PC-9 (cell line): ENCODE measurements at regions of chr10 and their contacts with region 1.

Region 1: GRCh38 chr10:126252884-126253618 is 135.2 kb downstream of the ADAM12 start:
- DNase-seq: peak in 1 of 2 experiments; percentile 42
- H3K4me3 ChIP-seq: no peak overlapping the region
- H3K27ac ChIP-seq: no peak overlapping the region
- H3K4me1 ChIP-seq: peaks cover 10% of the 10 kb centered on the region
- H3K27me3 ChIP-seq: no peaks in the 10 kb centered on the region
- CTCF ChIP-seq: no peak

Region 2: GRCh38 chr10:126199221-126199998 is 53.6 kb before region 1 on chr10:
- CTCF ChIA-PET with region 1: no interaction called
- POLR2A ChIA-PET with region 1: interaction called, 3 read pairs
- intact Hi-C with region 1: loop called (anchors 1 kb)
- DNase-seq: peak; percentile 72 to 75
- H3K4me3 ChIP-seq: no peak overlapping the region
- H3K27ac ChIP-seq: peak overlapping the region; percentile 79
- H3K4me1 ChIP-seq: peaks cover 35% of the 10 kb centered on the region
- H3K27me3 ChIP-seq: no peaks in the 10 kb centered on the region
- CTCF ChIP-seq: no peak

Region 3: GRCh38 chr10:126209451-126209850 is 43.6 kb before region 1 on chr10:
- CTCF ChIA-PET with region 1: no interaction called
- POLR2A ChIA-PET with region 1: no interaction called
- intact Hi-C with region 1: no loop called
- DNase-seq: no peak
- H3K4me3 ChIP-seq: no peak overlapping the region
- H3K27ac ChIP-seq: no peak overlapping the region
- H3K4me1 ChIP-seq: peaks cover 17% of the 10 kb centered on the region
- H3K27me3 ChIP-seq: no peaks in the 10 kb centered on the region
- CTCF ChIP-seq: no peak

Region 4: DNA sequence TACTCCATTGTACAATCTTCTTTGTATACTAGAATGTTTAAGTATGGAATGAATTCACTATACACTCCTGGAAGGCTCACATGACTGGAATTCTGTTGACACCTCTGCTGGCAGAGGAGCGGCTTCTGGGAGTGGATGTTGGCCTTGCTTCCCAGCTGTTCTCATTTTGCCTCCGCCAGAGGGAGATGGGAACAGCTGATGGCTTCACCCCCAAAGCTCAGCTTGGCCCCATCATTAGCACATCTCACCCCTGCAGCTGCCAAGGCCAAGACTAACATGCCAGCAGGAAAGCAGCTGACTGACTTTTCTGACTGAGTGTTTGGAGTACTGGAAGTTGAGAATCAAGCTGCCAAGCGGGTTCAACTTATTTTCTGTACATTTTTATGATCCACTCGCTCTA is 120.1 kb after region 1 on chr10:
- CTCF ChIA-PET with region 1: interaction called, 8 read pairs
- POLR2A ChIA-PET with region 1: no interaction called
- intact Hi-C with region 1: loop called (anchors 10 kb)
- DNase-seq: no peak
- H3K4me3 ChIP-seq: no peak overlapping the region
- H3K27ac ChIP-seq: no peak overlapping the region
- H3K4me1 ChIP-seq: peaks cover 20% of the 10 kb centered on the region
- H3K27me3 ChIP-seq: no peaks in the 10 kb centered on the region
- CTCF ChIP-seq: no peak

Region 5: DNA sequence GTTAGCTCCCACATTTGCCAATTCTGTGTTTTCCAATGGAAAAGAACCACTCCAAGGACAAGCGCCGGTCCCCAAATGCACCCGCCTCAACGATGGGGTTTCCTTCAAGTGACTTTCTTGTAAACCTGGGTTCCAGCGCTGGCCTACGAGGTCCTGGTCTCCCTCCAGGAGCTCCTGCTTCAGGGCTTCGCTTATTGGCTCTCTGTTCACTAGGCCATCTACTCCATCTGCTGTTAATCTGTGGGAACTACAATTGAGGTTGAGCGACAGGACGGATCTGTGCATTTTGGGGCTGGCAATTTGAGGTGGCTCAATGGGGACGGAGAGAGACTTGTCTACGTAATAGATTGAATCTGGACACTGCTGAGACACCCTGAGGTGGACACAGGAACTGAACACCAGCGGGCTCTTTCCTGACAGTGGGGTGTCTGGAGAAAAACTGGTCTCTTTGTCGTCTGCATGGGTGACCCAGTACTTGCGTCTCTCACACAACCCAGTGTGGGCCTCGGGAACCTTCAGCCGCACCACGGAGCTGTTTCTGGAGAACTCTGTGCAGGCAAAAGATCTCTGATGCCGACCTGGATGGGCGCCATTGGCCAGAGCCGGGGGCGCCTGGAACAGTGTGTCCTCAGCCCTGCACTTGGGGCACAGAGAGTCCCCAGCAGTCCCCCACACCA is 251.2 kb after region 1 on chr10:
- CTCF ChIA-PET with region 1: no interaction called
- POLR2A ChIA-PET with region 1: no interaction called
- intact Hi-C with region 1: loop called (anchors 5 kb)
- DNase-seq: peak; percentile 23 to 44
- H3K4me3 ChIP-seq: no peak overlapping the region
- H3K27ac ChIP-seq: no peak overlapping the region
- H3K4me1 ChIP-seq: 0 out of 2 replicates have a peak, but pooled peaks cover 3% of the 10 kb centered on the region
- H3K27me3 ChIP-seq: no peaks in the 10 kb centered on the region
- CTCF ChIP-seq: peak; percentile 81